ENCODE measurements at regions of chr9 and their contacts with region 1.

Region 1: GRCh38 chr9:79610791-79611614 is 39.2 kb downstream of the TLE4 start:
- DNase-seq: no peak
- ATAC-seq: peak; percentile 83
- H3K4me3 Mint-ChIP-seq: no peak overlapping the region
- H3K27ac Mint-ChIP-seq: peak overlapping the region; percentile 53
- H3K4me1 Mint-ChIP-seq: peaks cover 57% of the 10 kb centered on the region
- H3K27me3 Mint-ChIP-seq: no peaks in the 10 kb centered on the region
- CTCF ChIP-seq: no peak

Region 2: DNA sequence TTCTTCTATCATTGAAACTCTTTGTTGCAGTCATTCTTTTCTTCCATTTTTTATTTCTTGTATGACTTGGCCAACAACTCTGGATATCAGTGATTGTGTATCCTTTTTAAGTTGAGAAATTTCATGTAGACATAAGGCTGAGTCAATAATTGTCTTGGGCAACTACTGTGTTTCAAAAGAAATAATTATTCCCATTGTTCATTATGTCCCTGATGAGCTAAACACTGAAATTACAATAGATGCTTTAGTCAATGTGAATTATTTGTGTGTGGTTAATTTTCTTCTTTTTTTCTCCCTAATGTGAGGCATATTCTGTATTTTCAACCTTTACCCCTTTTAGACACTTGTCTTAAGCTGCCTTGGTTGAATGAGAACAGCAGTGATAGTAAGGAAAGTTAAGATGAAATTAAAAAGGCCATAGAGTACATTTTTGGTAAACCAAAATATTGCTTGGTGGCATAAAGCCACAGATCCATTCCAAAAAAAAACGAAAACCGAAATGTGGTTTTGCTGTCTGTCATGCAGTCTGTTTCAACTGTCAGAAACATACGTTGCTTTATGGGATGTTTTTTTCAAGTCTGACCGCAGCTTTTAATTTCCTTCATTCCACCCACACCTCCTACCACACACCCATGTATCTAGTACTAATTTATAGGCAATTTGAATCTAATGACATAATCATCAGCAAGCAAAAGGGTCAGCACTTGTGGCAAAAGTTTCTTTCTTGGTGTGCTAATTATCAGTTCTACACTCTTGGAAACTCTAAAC is 18.1 kb before region 1 on chr9:
- CTCF ChIA-PET with region 1: interaction called, 3 read pairs
- POLR2A ChIA-PET with region 1: no interaction called
- intact Hi-C with region 1: loop called (anchors 2 kb)
- DNase-seq: no peak
- ATAC-seq: no peak
- H3K4me3 Mint-ChIP-seq: peak overlapping the region; percentile 33
- H3K27ac Mint-ChIP-seq: no peak overlapping the region
- H3K4me1 Mint-ChIP-seq: peaks cover 60% of the 10 kb centered on the region
- H3K27me3 Mint-ChIP-seq: no peaks in the 10 kb centered on the region
- CTCF ChIP-seq: no peak

Region 3: DNA sequence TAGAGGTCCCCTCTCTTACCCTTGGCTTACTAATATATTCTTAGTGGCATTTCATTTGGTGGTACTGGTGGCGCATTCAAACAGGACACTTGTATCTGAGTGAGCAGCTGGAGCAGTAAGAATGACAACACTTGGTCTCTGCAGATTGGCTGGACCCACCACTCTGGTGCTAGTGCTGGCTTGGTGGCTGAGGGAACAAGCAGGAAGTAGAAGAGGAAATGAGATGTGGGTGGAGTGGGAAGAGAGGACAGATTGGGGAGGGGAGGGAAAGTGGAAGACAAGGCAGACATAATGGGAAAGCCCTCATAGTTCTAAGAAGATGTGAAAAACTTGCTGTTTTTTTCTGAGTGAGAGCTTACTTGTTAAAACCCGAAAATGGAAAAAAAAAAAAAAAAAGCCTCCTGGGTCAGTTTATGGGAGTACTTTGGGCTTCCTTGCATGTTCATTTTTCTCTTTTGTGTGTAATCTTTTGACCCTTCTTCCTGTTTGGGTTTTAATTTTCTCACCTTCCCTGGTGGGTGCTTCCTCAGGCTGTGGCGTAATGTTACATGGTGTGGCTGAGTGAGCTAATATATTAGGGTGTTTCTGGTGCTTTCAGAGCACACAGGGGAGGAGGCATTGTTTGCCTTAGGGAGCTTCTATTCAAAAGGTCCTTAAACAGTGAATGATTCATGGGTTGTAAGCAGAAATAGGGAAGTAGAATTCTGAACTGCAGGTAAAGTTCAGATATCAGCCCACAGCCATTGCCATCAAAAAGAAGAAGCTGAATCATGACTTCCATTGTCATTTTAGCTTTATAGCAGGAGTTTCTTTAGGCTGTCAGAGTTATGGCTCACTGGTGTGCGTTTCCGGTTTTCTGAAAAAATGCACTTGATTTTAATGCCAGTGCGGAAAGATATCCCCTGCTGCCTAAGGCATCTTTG is 13.1 kb after region 1 on chr9:
- CTCF ChIA-PET with region 1: no interaction called
- POLR2A ChIA-PET with region 1: interaction called, 4 read pairs
- intact Hi-C with region 1: loop called (anchors 1 kb)
- DNase-seq: no peak
- ATAC-seq: peak; percentile 93
- H3K4me3 Mint-ChIP-seq: peak overlapping the region; percentile 61
- H3K27ac Mint-ChIP-seq: peak overlapping the region; percentile 77
- H3K4me1 Mint-ChIP-seq: peaks cover 30% of the 10 kb centered on the region
- H3K27me3 Mint-ChIP-seq: no peaks in the 10 kb centered on the region
- CTCF ChIP-seq: no peak

Measured in activated B cell treated with CpG ODN at 0.5 μM for 24 hours (primary cell).